ENCODE measurements at regions of chr14 and their contacts with region 1.

Region 1: GRCh38 chr14:39184628-39185255 is 9.7 kb downstream of the PNN start:
- DNase-seq: no peak
- H3K4me3 ChIP-seq: no peak overlapping the region
- H3K4me3 Mint-ChIP-seq: no peak overlapping the region
- H3K27ac Mint-ChIP-seq: peak overlapping the region; percentile 14
- H3K4me1 ChIP-seq: no peaks in the 10 kb centered on the region
- H3K4me1 Mint-ChIP-seq: no peaks in the 10 kb centered on the region
- H3K27me3 ChIP-seq: no peaks in the 10 kb centered on the region
- H3K27me3 Mint-ChIP-seq: no peaks in the 10 kb centered on the region
- CTCF ChIP-seq: no peak

Region 2: DNA sequence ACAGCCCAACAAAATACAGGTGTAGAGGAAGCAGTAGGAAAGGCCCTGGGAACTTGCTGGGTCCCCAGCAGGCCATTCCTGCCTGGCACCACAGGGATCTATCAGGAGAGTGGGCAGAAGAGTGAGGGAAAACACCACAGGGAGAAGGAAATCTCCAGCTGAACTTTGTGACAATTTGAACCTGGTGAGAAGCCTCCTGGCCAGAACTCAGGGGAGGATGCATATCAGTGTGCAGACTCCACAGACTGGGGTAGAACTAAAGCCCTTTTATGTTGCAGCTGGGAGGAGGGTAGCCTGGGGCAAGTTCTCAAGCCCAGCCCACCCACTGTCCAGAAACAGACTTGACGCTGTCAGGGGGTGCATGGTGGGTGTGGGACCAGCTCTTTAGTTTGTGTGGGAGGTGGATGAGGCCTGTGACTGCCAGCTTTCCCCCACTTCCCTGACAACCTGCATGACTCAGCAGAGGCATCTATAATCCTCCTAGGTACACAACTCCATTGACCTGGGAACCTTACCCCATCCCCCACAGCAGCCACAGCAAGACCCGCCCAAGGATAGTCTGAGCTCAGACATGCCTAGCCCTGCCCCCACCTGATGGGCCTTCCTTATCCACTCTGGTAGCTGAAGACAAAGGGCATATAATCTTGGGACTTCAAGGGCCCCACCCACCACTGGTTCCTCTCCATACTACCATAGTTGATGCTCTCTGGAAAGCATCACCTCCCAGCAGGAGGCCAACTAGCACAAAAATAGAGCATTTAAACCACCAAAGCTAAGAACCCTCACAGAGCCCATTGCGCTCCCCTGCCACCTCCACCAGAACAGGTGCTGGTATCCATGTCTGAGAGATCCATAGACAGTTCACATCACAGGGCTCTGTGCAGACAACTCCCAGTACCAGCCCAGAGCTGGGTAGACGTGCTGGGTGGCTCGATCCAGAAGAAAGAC is 19.2 kb after region 1 on chr14:
- CTCF ChIA-PET with region 1: no interaction called
- POLR2A ChIA-PET with region 1: interaction called, 4 read pairs
- intact Hi-C with region 1: loop called (anchors 1 kb)
- DNase-seq: peak; percentile 85 to 95
- H3K4me3 ChIP-seq: no peak overlapping the region
- H3K4me3 Mint-ChIP-seq: peak overlapping the region; percentile 20
- H3K27ac Mint-ChIP-seq: peak overlapping the region; percentile 57
- H3K4me1 ChIP-seq: peaks cover 28% of the 10 kb centered on the region
- H3K4me1 Mint-ChIP-seq: peaks cover 18% of the 10 kb centered on the region
- H3K27me3 ChIP-seq: no peaks in the 10 kb centered on the region
- H3K27me3 Mint-ChIP-seq: no peaks in the 10 kb centered on the region
- CTCF ChIP-seq: no peak